AG04450 (cell line): ENCODE measurements at regions of chr17 and their contacts with region 1.

Region 1: DNA sequence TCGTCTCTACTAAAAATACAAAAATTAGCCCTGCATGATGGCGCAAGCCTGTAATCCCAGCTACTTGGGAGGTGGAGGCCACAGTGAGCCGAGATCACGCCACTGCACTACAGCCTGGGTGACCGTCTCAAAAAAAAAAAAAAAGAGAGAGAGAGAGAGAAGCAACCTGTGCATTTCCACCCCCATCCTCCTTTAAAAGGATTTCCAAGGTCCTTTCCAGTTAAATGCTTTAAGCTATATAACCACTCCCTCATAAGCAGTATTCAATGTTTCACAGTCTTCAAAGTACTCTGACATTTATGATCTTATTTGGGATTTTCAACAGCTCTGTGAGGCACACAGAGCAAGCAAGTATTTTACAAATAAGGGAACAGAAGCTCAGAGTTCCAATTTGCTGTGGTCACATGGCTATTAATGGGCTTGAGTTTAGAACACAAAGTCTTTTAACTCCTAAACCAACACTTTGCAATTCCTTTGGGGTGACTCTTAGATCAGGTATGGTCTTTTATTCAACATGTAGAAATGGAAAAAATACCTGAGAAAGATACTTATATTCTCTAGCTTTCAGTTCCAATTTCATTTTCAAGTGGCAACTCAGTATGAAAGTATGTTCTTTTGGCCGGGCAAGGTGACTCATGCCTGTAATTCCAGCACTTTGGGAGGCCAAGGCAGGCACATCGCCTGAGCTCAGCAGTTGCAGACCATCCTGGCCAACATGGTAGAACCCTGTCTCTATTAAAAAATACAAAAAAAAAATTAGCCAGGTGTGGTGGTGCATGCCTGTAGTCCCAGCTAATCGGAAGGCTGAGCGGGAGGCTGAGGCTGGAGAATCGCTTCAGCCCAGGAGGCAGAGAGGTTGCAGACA is 31.3 kb downstream of the SPOP start:
- DNase-seq: peak; percentile 29
- H3K4me3 ChIP-seq: peak overlapping the region; percentile 8
- H3K27ac ChIP-seq: peak overlapping the region; percentile 77
- H3K27me3 ChIP-seq: no peaks in the 10 kb centered on the region
- CTCF ChIP-seq: no peak

Region 2: GRCh38 chr17:48997083-48997826 is 649.4 kb before region 1 on chr17 and contains the start of gene IGF2BP1:
- CTCF ChIA-PET with region 1: no interaction called
- POLR2A ChIA-PET with region 1: interaction called, 12 read pairs
- DNase-seq: no peak
- H3K4me3 ChIP-seq: peak within 1 kb of the TSS; percentile 92
- H3K27ac ChIP-seq: peak within 1 kb of the TSS; percentile 89
- H3K27me3 ChIP-seq: peaks cover 28% of the 10 kb centered on the region
- CTCF ChIP-seq: no peak
- polyA plus RNA-seq, gene IGF2BP1: 9.9 and 11.7 TPM in 2 replicates

Region 3: DNA sequence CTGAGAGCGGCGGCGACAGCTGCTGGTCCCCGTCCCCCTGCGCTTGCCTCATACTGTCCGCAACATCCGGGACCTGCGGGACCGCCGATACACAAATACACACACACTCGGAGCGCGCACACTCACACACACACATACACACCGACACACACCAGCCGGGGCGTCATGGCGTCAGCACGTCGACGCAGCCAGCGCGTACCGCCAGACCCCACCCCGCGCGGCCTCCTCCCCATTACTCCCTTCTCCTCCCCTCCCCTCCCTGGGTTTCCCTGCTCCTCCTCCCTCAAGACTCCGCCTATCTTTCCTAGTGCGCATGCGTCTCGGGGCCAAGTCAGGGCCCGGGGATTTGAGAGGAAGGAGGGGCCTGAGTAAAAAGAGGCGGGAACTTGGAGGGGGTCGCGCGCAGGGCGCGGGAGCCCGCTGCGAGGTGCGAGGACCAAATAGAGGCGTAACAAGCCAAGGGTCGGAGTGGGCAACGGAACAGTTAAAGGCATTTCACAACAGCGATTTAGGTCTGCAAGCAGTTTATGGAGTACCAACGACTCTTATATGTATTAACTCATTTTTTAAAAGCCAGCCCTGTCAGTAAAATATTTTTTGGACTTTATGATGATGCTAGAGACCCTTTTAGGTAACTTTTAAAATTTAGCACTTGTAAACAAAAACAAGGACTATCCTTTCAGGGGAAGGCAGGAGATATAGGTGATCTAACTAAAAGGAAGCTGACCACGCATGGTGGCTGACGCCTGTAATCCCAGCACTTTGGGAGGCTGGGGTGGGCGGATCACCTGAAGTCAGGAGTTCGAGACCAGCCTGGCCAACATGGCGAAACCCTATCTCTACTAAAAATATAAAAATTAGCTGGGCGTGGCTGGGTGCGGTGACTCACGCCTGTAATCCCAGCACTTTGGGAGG is 31.6 kb after region 1 on chr17 and contains the start of gene SPOP:
- CTCF ChIA-PET with region 1: interaction called, 3 read pairs
- POLR2A ChIA-PET with region 1: interaction called, 20 read pairs
- DNase-seq: peak; percentile 99
- H3K4me3 ChIP-seq: peak within 1 kb of the TSS; percentile 78
- H3K27ac ChIP-seq: peak within 1 kb of the TSS; percentile 83
- H3K27me3 ChIP-seq: no peaks in the 10 kb centered on the region
- CTCF ChIP-seq: no peak
- polyA plus RNA-seq, gene SPOP: 51.6 and 52.1 TPM in 2 replicates

Region 4: DNA sequence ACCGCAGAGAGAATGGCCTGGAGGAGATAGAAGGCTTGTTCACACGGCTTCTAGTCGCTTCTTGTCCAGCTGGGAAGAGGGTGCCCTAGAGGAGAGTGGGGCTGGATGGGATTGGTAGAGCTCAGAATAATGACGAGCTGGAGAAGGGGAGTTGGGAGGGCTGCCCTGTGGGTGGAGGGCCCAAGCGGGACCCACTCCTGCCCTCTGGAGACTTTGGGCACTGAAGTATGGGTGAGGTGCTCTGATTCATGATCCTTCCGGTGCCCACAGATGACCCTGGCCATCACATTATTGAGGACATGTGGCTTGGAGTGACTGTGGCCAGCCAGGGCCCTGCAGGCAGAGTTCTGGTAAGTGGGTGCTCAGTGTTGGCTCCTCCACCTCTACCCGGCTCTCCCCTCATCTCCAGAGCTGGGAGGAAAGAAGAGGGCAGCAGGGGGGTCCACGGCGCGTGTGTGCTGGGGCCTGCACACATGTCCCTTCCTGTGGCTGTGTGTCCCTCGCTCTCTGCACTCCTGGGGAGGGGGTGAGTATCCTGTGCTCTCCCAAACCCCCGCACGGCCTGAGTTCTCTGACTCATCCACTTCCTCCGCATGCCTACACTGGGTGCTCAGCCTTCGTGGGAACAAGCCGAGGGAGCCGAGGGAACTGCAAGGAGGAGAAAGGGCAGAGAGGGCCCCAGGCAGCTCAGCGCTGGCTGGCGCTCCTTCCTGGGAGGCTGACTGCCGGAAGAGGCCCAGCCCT is 417.8 kb after region 1 on chr17:
- CTCF ChIA-PET with region 1: no interaction called
- POLR2A ChIA-PET with region 1: no interaction called
- DNase-seq: peak; percentile 85
- H3K4me3 ChIP-seq: no peak overlapping the region
- H3K27ac ChIP-seq: peak overlapping the region; percentile 98
- H3K27me3 ChIP-seq: no peaks in the 10 kb centered on the region
- CTCF ChIP-seq: no peak